B cell (primary cell): ENCODE measurements at regions of chr5 and their contacts with region 1.

Region 1: GRCh38 chr5:68239487-68239886 is 23.9 kb downstream of the PIK3R1 start:
- DNase-seq: peak; percentile 85
- ATAC-seq: peak; percentile 85
- H3K4me3 ChIP-seq: peak overlapping the region in 1 of 5 experiments; percentile 23
- H3K4me3 Mint-ChIP-seq: peak overlapping the region; percentile 79
- H3K27ac ChIP-seq: peak overlapping the region; percentile 45 to 72
- H3K27ac Mint-ChIP-seq: peak overlapping the region; percentile 67
- H3K4me1 ChIP-seq: peaks cover 40 to 55% of the 10 kb centered on the region in 2 donors
- H3K4me1 Mint-ChIP-seq: peaks cover 74% of the 10 kb centered on the region
- H3K27me3 ChIP-seq: no peaks in the 10 kb centered on the region
- H3K27me3 Mint-ChIP-seq: no peaks in the 10 kb centered on the region
- CTCF ChIP-seq: no peak

Region 2: DNA sequence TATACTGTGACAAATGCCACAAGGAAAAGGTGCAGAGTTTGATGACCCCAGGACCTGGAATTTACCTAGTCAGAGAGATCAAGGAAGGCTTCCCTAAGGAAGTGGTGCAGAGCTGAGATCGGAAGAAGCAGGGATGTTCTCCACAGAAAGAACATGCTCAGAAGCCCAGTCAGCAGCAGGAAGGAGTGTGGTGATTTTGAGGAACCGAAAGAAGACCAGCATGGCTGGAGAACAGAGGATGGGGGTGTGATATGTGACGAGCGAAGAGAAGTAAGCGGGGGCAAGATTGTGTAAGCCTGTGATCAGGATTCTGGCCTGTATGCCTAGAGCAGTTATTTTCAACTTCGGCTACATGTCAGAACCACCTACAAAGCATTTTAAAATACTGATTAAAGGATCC is 42.6 kb before region 1 on chr5:
- CTCF ChIA-PET with region 1: no interaction called
- POLR2A ChIA-PET with region 1: no interaction called
- intact Hi-C with region 1: loop called (anchors 10 kb)
- DNase-seq: peak; percentile 87
- ATAC-seq: peak; percentile 100
- H3K4me3 ChIP-seq: no peak overlapping the region
- H3K4me3 Mint-ChIP-seq: peak overlapping the region; percentile 13
- H3K27ac ChIP-seq: peak overlapping the region; percentile 12 to 77
- H3K27ac Mint-ChIP-seq: peak overlapping the region; percentile 77
- H3K4me1 ChIP-seq: peaks cover 20 to 26% of the 10 kb centered on the region in 2 donors
- H3K4me1 Mint-ChIP-seq: peaks cover 39% of the 10 kb centered on the region
- H3K27me3 ChIP-seq: no peaks in the 10 kb centered on the region
- H3K27me3 Mint-ChIP-seq: no peaks in the 10 kb centered on the region
- CTCF ChIP-seq: no peak

Region 3: DNA sequence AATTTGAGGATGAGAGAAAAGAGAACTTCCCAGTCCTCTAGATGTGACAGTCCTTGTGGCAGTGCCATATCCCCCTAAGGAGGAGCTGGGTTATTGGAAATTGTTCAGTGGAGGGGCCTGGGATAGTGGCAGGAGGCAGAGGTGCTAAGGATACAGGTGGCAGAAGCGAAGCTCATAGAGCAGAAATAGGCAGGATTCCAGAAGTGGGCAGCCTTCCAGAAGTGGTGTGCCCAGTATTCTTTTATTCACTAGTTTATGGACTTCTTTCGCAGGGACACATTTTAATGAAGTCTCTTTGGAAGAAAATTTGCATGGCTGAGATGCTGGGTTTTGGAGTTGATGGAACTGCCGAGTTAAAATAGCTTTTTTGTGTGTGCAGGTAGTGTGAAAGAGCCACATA is 17.2 kb before region 1 on chr5:
- CTCF ChIA-PET with region 1: no interaction called
- POLR2A ChIA-PET with region 1: no interaction called
- intact Hi-C with region 1: no loop called
- DNase-seq: no peak
- ATAC-seq: no peak
- H3K4me3 ChIP-seq: no peak overlapping the region
- H3K4me3 Mint-ChIP-seq: no peak overlapping the region
- H3K27ac ChIP-seq: no peak overlapping the region
- H3K27ac Mint-ChIP-seq: no peak overlapping the region
- H3K4me1 ChIP-seq: peaks cover 29 to 32% of the 10 kb centered on the region in 2 donors
- H3K4me1 Mint-ChIP-seq: peaks cover 76% of the 10 kb centered on the region
- H3K27me3 ChIP-seq: no peaks in the 10 kb centered on the region
- H3K27me3 Mint-ChIP-seq: no peaks in the 10 kb centered on the region
- CTCF ChIP-seq: no peak

Region 4: GRCh38 chr5:68261569-68262065 is 22.1 kb after region 1 on chr5:
- CTCF ChIA-PET with region 1: no interaction called
- POLR2A ChIA-PET with region 1: no interaction called
- intact Hi-C with region 1: no loop called
- DNase-seq: no peak
- ATAC-seq: no peak
- H3K4me3 ChIP-seq: no peak overlapping the region
- H3K4me3 Mint-ChIP-seq: no peak overlapping the region
- H3K27ac ChIP-seq: peak overlapping the region in 1 of 2 donors; percentile 28
- H3K27ac Mint-ChIP-seq: peak overlapping the region; percentile 27
- H3K4me1 ChIP-seq: peaks cover 11 to 16% of the 10 kb centered on the region in 2 donors
- H3K4me1 Mint-ChIP-seq: peaks cover 73% of the 10 kb centered on the region
- H3K27me3 ChIP-seq: no peaks in the 10 kb centered on the region
- H3K27me3 Mint-ChIP-seq: no peaks in the 10 kb centered on the region
- CTCF ChIP-seq: no peak